AG04450 (cell line): ENCODE measurements at regions of chr11 and their contacts with region 1.

Region 1: GRCh38 chr11:122179961-122180834 is 64.2 kb upstream of the BLID start:
- DNase-seq: peak; percentile 85
- H3K4me3 ChIP-seq: peak overlapping the region; percentile 68
- H3K27ac ChIP-seq: peak overlapping the region; percentile 89
- H3K27me3 ChIP-seq: no peaks in the 10 kb centered on the region
- CTCF ChIP-seq: no peak

Region 2: DNA sequence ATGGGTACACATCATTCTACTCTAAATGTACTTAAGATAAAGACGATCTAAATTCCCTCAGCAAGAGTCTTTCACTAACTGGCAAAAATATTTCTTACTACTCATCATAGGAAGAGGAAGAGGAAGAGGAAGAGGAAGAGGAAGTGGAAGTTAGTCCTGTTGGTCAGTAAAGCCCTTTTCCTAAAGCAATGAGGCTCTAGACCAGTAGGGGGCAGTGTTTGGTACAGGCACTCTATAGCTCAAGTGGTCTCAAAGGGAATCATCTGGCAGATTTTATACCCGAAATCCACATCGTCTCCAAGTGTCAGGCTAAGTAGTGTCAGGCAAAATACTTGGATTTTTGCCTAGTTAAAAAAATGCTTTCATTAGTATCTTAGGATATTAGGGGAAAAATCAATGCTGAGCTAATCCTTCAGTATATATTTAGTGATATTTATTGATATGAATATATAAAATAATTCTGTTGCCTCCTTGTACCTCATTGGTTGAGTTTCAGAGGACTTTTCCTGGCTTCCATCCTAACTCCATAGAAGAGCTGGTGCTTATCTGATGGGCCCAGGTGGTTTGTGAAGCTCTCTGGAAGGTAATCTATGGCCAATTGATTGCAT is 71.9 kb before region 1 on chr11:
- CTCF ChIA-PET with region 1: no interaction called
- POLR2A ChIA-PET with region 1: interaction called, 12 read pairs
- DNase-seq: no peak
- H3K4me3 ChIP-seq: no peak overlapping the region
- H3K27ac ChIP-seq: no peak overlapping the region
- H3K27me3 ChIP-seq: no peaks in the 10 kb centered on the region
- CTCF ChIP-seq: peak; percentile 64

Region 3: DNA sequence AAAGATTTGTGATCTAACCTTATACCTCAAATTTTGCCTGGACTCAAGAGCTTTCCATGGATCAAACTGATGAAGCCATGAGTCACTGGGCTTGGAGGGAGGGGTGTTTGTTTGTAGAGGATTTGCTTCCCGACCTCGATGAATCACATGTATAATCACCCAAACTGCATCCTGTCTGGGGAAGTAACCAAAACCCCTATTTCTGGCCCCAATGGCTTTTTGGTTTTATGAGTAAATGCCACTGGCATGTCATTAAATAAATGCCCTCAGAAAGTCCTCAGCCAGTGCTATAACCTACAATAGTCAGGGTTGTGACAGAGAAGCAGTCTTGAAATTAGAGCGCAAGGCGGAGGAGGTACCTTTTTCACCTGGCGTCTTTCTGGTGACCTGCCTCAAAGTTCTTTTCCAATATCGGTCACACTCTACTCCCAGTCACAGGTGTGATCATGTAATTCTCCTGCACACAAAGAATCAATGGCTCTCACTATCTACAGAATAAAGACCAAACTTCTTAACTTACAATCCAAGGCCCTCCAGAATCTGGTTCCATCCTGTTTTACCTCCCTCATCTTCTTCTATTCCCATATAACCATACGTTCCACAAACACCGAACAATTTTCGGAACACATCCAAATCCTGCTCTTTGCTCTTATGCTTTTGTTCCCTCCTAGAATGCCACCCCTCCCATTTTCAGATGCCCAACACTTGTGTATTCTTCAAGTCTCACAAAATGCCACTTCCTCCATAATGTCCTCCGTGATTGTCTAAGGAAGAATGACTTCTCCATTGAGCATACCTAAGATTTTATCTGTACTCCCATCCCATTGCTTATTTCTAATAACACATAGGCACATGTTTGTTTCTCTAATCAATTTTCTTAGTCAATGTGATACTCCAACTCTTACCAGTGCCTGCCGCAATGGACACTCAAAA is 17.1 kb after region 1 on chr11:
- CTCF ChIA-PET with region 1: interaction called, 6 read pairs
- POLR2A ChIA-PET with region 1: interaction called, 17 read pairs
- DNase-seq: peak; percentile 94
- H3K4me3 ChIP-seq: no peak overlapping the region
- H3K27ac ChIP-seq: peak overlapping the region; percentile 63
- H3K27me3 ChIP-seq: no peaks in the 10 kb centered on the region
- CTCF ChIP-seq: no peak

Region 4: GRCh38 chr11:122202951-122203456 is 22.8 kb after region 1 on chr11:
- CTCF ChIA-PET with region 1: interaction called, 6 read pairs
- POLR2A ChIA-PET with region 1: interaction called, 17 read pairs
- DNase-seq: peak; percentile 48
- H3K4me3 ChIP-seq: peak overlapping the region; percentile 70
- H3K27ac ChIP-seq: peak overlapping the region; percentile 79
- H3K27me3 ChIP-seq: no peaks in the 10 kb centered on the region
- CTCF ChIP-seq: peak; percentile 99

Region 5: DNA sequence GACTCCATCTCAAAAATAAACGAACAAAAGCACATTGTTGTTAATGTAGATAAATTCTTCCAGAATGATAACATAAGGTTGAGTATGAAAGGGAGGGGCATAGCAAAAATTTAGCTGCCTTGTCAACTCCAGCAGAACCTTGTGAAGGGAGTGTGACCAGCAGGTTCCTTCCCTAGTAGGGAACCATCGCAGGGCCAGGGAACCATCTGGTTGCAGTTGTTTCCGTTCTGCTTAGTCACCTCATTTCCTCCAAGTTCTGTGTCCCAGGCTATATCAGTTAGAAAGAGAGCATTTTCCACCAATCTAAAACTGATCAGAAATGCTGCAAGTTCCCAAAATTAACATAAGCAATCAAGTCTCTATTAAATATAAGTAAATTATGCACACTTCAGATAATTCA is 62.5 kb after region 1 on chr11:
- CTCF ChIA-PET with region 1: no interaction called
- POLR2A ChIA-PET with region 1: no interaction called
- DNase-seq: no peak
- H3K4me3 ChIP-seq: no peak overlapping the region
- H3K27ac ChIP-seq: no peak overlapping the region
- H3K27me3 ChIP-seq: no peaks in the 10 kb centered on the region
- CTCF ChIP-seq: no peak